Endothelial cell of umbilical vein (primary cell): ENCODE measurements at regions of chr11 and their contacts with region 1.

Region 1: GRCh38 chr11:36009473-36009872 is 65.6 kb downstream of the LDLRAD3 start:
- DNase-seq: peak; percentile 82
- H3K4me3 ChIP-seq: peak overlapping the region in 1 of 3 experiments; percentile 51
- H3K27ac ChIP-seq: peak overlapping the region; percentile 82
- H3K4me1 ChIP-seq: peaks cover 51% of the 10 kb centered on the region
- H3K27me3 ChIP-seq: no peaks in the 10 kb centered on the region
- CTCF ChIP-seq: no peak
- POLR2A ChIP-seq: no peak

Region 2: GRCh38 chr11:35907648-35908431 is 101.6 kb before region 1 on chr11:
- CTCF ChIA-PET with region 1: no interaction called
- POLR2A ChIA-PET with region 1: no interaction called
- dilution Hi-C with region 1: no loop called
- intact Hi-C with region 1: loop called (anchors 10 kb)
- DNase-seq: peak; percentile 82
- H3K4me3 ChIP-seq: no peak overlapping the region
- H3K27ac ChIP-seq: peak overlapping the region; percentile 16
- H3K4me1 ChIP-seq: peaks cover 26% of the 10 kb centered on the region
- H3K27me3 ChIP-seq: no peaks in the 10 kb centered on the region
- CTCF ChIP-seq: no peak
- POLR2A ChIP-seq: no peak

Region 3: GRCh38 chr11:35943713-35944655 is 65.5 kb before region 1 on chr11 and contains the start of gene LDLRAD3:
- CTCF ChIA-PET with region 1: no interaction called
- POLR2A ChIA-PET with region 1: no interaction called
- dilution Hi-C with region 1: no loop called
- intact Hi-C with region 1: loop called (anchors 2 kb)
- DNase-seq: peak; percentile 72
- H3K4me3 ChIP-seq: peak within 1 kb of the TSS; percentile 62 to 82 (median 77)
- H3K27ac ChIP-seq: peak within 1 kb of the TSS; percentile 45
- H3K4me1 ChIP-seq: peaks cover 18% of the 10 kb centered on the region
- H3K27me3 ChIP-seq: no peaks in the 10 kb centered on the region
- CTCF ChIP-seq: no peak
- POLR2A ChIP-seq: peak; percentile 54
- total RNA-seq, gene LDLRAD3: 19.9 and 25.1 TPM in 2 replicates

Region 4: DNA sequence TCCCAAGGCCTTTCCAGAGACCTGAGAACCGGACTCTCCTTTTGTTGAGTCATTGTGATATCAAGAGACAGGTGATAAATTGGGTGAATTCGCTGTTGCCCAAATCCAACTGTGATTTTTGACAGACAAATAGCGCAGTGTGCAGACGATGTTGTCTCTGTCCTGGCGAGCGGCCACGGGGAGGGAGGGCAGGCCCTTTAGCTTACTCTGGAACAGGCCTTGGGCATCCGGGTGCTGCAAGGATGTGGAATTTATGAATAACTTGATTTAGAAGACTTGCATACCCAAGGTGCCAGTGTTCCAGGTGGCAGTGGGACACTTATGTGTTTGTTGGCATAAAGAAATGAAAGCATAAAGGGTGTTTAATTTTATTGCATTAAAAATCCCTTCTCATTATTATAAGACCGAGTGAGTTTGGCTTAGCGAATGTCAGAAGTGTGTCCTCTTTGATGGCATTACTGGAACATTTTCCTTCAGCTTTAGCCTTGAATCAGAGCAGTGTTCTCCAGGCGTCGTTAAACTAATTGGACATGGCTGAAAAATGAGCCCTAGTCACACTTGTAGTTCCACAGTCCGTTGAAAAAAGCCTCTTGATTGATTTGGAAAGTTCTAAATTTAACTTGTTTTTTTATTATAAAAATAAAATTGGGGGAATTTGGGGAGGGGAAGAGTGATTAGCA is 56.3 kb before region 1 on chr11:
- CTCF ChIA-PET with region 1: interaction called, 8 read pairs
- POLR2A ChIA-PET with region 1: no interaction called
- dilution Hi-C with region 1: no loop called
- intact Hi-C with region 1: loop called (anchors 2 kb)
- DNase-seq: peak; percentile 42
- H3K4me3 ChIP-seq: no peak overlapping the region
- H3K27ac ChIP-seq: peak overlapping the region; percentile 35
- H3K4me1 ChIP-seq: peaks cover 31% of the 10 kb centered on the region
- H3K27me3 ChIP-seq: no peaks in the 10 kb centered on the region
- CTCF ChIP-seq: no peak
- POLR2A ChIP-seq: no peak

Region 5: DNA sequence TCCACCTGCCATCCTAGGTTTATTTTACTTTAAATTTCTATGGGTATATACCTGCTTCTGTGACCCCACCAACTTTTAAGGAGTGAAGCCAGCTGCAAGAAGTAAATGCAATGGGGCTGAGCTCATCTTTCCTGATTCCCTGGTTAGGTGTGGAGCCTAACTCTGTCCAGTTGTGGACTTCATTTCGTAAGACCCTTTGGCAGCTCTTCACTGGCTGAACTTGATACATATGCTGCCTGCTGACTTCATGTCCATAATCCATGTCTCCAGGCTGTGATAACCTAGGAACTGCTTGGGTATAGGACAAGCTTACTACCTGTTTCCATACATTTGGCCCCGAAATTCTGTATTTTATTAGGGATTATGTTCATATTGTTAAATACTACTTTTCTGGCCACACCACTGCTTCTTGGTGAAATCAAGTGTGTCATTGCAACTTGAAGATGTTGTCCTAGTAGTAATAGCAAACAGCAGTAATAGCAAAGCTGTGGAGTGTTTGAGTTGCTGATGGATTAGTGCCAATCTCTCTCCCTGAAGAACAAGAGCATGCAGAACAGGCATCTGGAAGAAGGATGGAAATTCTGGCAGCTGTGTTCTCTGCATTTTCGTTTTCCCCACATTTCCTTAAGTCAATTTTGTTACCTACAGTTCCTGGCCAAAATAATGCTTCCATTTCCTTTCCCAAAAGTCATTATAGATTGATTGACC is 34.4 kb before region 1 on chr11:
- CTCF ChIA-PET with region 1: no interaction called
- POLR2A ChIA-PET with region 1: no interaction called
- dilution Hi-C with region 1: no loop called
- intact Hi-C with region 1: loop called (anchors 2 kb)
- DNase-seq: no peak
- H3K4me3 ChIP-seq: no peak overlapping the region
- H3K27ac ChIP-seq: no peak overlapping the region
- H3K4me1 ChIP-seq: peaks cover 10% of the 10 kb centered on the region
- H3K27me3 ChIP-seq: no peaks in the 10 kb centered on the region
- CTCF ChIP-seq: no peak
- POLR2A ChIP-seq: no peak

Region 6: GRCh38 chr11:36149538-36150242 is 140.2 kb after region 1 on chr11:
- CTCF ChIA-PET with region 1: no interaction called
- POLR2A ChIA-PET with region 1: no interaction called
- dilution Hi-C with region 1: no loop called
- intact Hi-C with region 1: loop called (anchors 2 kb)
- DNase-seq: peak; percentile 99
- H3K4me3 ChIP-seq: no peak overlapping the region
- H3K27ac ChIP-seq: peak overlapping the region; percentile 93
- H3K4me1 ChIP-seq: peaks cover 25% of the 10 kb centered on the region
- H3K27me3 ChIP-seq: no peaks in the 10 kb centered on the region
- CTCF ChIP-seq: peak; percentile 43 to 50
- POLR2A ChIP-seq: peak; percentile 64